Mammary epithelial cell (primary cell): ENCODE measurements at regions of chr1 and their contacts with region 1.

Region 1: GRCh38 chr1:27522432-27523351 is 32.7 kb upstream of the WASF2 start:
- DNase-seq: peak; percentile 99
- H3K4me3 ChIP-seq: peak overlapping the region in 1 of 3 experiments; percentile 7
- H3K27ac ChIP-seq: peak overlapping the region; percentile 83
- H3K4me1 ChIP-seq: peaks cover 91% of the 10 kb centered on the region
- H3K27me3 ChIP-seq: no peaks in the 10 kb centered on the region
- CTCF ChIP-seq: peak; percentile 29 to 42

Region 2: DNA sequence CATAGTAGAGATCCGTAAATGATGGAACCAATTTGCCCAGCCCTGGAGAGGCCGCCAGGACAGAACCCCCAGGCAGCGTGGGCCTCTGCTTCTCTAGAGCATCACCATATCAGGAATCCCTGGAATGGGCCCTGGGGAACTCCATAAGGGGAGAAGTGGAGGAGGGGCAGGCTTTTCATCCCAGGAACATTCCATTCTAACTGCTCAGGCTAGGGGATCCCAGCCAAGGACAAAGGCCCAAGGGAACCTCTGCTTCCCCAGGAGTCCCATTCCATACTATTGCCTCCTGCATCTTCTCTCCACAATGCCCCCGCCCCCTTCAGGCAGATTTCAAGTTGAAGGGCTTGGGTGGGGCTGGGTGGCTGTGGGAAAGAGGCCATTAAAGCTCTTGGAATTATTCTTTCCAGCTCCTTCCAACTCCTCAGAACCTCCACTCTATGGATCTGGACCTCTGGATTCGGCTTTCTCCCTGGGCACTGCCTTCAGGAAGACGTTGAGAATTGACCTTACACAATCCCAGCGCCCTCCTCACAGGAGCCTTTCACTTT is 523.2 kb before region 1 on chr1:
- CTCF ChIA-PET with region 1: no interaction called
- dilution Hi-C with region 1: no loop called
- in situ Hi-C with region 1: no loop called
- intact Hi-C with region 1: no loop called
- DNase-seq: peak; percentile 94
- H3K4me3 ChIP-seq: no peak overlapping the region
- H3K27ac ChIP-seq: peak overlapping the region; percentile 96
- H3K4me1 ChIP-seq: peaks cover 88% of the 10 kb centered on the region
- H3K27me3 ChIP-seq: no peaks in the 10 kb centered on the region
- CTCF ChIP-seq: peak in 1 of 2 donors; percentile 15

Region 3: GRCh38 chr1:27445177-27445936 is 77.3 kb before region 1 on chr1:
- CTCF ChIA-PET with region 1: no interaction called
- dilution Hi-C with region 1: no loop called
- in situ Hi-C with region 1: no loop called
- intact Hi-C with region 1: no loop called
- DNase-seq: no peak
- H3K4me3 ChIP-seq: no peak overlapping the region
- H3K27ac ChIP-seq: no peak overlapping the region
- H3K4me1 ChIP-seq: no peaks in the 10 kb centered on the region
- H3K27me3 ChIP-seq: no peaks in the 10 kb centered on the region
- CTCF ChIP-seq: no peak

Region 4: DNA sequence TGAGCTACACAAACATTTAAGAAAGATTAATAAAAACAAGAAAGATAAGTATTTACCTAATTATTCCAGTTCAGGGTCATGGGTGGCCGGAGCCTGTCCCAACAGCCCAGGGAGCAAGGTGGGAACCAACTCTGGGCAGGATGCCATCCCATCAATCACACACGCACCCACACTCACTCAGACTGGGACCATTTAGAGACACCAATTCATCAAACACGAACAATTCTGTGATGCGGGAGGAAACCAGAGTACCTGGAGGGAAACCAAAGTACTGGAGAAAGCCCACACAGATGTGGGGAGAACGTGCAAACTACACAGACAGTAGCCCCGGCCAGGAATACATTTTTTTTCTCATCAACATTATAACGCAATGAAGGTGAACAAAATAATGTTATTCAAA is 48.9 kb before region 1 on chr1:
- CTCF ChIA-PET with region 1: no interaction called
- dilution Hi-C with region 1: no loop called
- in situ Hi-C with region 1: no loop called
- intact Hi-C with region 1: loop called (anchors 1 kb)
- DNase-seq: no peak
- H3K4me3 ChIP-seq: no peak overlapping the region
- H3K27ac ChIP-seq: no peak overlapping the region
- H3K4me1 ChIP-seq: peaks cover 7% of the 10 kb centered on the region
- H3K27me3 ChIP-seq: no peaks in the 10 kb centered on the region
- CTCF ChIP-seq: no peak

Region 5: DNA sequence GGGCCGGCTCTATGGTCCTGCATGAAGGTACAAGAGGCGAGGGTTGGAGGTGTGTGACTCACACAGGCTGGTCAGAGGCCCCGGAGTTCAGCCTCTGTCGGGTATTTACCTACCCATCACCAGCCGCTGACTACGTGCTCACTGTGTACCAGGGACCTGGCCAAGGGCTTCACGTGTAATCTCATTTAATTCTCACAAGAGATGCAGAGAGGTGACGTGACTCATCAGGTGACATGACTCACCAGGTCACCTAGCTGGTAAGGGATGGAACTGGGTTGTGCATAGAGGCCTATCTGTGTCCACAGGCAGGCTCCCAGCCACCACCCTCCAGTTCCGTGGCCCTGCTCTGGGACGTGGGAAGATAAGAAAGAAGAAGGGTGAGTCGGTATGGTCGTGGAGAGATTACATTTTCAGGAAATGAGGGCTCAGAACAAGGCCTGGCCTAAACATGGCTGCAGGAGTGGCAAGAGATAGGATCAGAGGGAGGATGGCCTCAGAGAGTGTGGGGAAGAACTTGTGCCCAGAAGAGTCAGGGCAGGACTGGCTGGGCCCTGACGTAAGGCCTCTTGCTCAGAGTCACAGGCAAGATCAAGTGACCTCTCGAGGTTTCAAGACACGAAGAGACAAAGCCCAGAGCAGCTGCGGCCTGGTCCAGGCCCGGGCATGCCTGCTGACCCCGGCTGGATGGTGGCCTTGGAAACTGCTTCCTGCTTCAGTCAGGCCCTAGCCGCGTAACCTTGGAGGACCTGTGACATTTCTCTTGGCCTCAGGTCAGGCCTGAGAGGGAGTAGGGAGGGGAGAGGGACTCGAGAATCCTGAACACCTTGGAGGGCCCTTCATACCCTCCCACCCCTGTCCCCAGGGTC is 19.9 kb after region 1 on chr1:
- CTCF ChIA-PET with region 1: no interaction called
- dilution Hi-C with region 1: no loop called
- in situ Hi-C with region 1: no loop called
- intact Hi-C with region 1: loop called (anchors 1 kb)
- DNase-seq: peak; percentile 99
- H3K4me3 ChIP-seq: no peak overlapping the region
- H3K27ac ChIP-seq: peak overlapping the region; percentile 80
- H3K4me1 ChIP-seq: peaks cover 81% of the 10 kb centered on the region
- H3K27me3 ChIP-seq: no peaks in the 10 kb centered on the region
- CTCF ChIP-seq: no peak

Region 6: GRCh38 chr1:27589841-27590426 is 67.2 kb after region 1 on chr1:
- CTCF ChIA-PET with region 1: no interaction called
- dilution Hi-C with region 1: no loop called
- in situ Hi-C with region 1: no loop called
- intact Hi-C with region 1: no loop called
- DNase-seq: no peak
- H3K4me3 ChIP-seq: no peak overlapping the region
- H3K27ac ChIP-seq: no peak overlapping the region
- H3K4me1 ChIP-seq: peaks cover 41% of the 10 kb centered on the region
- H3K27me3 ChIP-seq: no peaks in the 10 kb centered on the region
- CTCF ChIP-seq: no peak

Region 7: DNA sequence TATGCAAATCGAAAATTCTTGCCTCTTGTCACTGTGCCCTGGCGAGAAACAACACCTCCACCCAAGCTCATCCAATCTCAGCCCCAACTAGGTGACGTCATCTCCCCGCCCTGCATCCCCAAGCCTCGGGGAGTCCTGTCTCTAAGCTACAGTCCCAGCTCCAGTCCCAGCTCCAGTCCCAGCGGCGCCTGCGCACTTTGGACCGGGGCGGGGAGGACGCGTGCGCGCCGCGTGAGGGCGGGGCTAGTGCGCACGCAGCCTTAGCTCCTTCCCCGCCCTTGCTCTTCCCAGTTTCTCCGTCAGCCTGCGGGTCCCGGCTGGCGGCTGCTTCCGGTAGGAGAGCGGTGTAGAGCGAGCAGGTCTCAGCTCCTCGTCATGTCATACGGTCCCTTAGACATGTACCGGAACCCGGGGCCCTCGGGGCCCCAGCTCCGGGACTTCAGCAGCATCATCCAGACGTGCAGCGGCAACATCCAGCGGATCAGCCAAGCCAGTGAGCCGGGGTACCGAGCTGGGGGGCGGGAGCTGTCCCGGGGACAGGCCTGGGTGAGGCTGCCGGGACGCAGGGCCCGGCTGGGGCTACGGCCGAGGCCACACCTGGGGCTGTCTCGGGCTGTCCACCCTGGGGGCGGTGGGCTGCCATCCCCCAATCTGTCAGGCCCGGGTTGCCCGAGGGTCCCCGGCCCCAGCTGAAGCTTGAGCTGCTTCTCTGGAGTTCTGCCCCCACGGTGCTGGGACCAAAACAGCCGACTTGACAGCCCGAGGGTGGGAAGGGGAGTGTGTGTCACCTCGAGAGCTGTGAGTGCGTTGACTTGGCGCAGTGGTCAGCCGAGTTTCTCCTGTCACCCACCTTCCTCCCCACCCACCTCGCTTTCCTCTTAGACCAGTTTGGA is 250.5 kb after region 1 on chr1 and contains the start of gene STX12:
- CTCF ChIA-PET with region 1: no interaction called
- dilution Hi-C with region 1: no loop called
- in situ Hi-C with region 1: no loop called
- intact Hi-C with region 1: no loop called
- DNase-seq: peak; percentile 100
- H3K4me3 ChIP-seq: peak within 1 kb of the TSS; percentile 79 to 98 (median 83)
- H3K27ac ChIP-seq: peak within 1 kb of the TSS; percentile 79
- H3K4me1 ChIP-seq: peaks cover 8% of the 10 kb centered on the region
- H3K27me3 ChIP-seq: no peaks in the 10 kb centered on the region
- CTCF ChIP-seq: no peak
- total RNA-seq, gene STX12: 39.1 to 59.8 TPM